Activated naive CD4-positive, alpha-beta T cell treated with anti-CD3 and anti-CD28 coated beads for 36 hours (primary cell): ENCODE measurements at regions of chr3 and their contacts with region 1.

Region 1: GRCh38 chr3:142987080-142987700 is 14.2 kb upstream of the U2SURP start:
- DNase-seq: no peak
- H3K4me3 Mint-ChIP-seq: no peak overlapping the region
- H3K27ac Mint-ChIP-seq: no peak overlapping the region
- H3K4me1 Mint-ChIP-seq: no peaks in the 10 kb centered on the region
- H3K27me3 Mint-ChIP-seq: no peaks in the 10 kb centered on the region

Region 2: GRCh38 chr3:142844339-142844977 is 142.7 kb before region 1 on chr3:
- CTCF ChIA-PET with region 1: interaction called, 3 read pairs
- intact Hi-C with region 1: loop called (anchors 1 kb)
- DNase-seq: no peak
- H3K4me3 Mint-ChIP-seq: no peak overlapping the region
- H3K27ac Mint-ChIP-seq: no peak overlapping the region
- H3K4me1 Mint-ChIP-seq: peaks cover 2% of the 10 kb centered on the region
- H3K27me3 Mint-ChIP-seq: peaks cover 7% of the 10 kb centered on the region

Region 3: GRCh38 chr3:142929109-142929508 is 58.1 kb before region 1 on chr3:
- CTCF ChIA-PET with region 1: interaction called, 4 read pairs
- intact Hi-C with region 1: loop called (anchors 1 kb)
- DNase-seq: peak; percentile 65
- H3K4me3 Mint-ChIP-seq: no peak overlapping the region
- H3K27ac Mint-ChIP-seq: no peak overlapping the region
- H3K4me1 Mint-ChIP-seq: no peaks in the 10 kb centered on the region
- H3K27me3 Mint-ChIP-seq: peaks cover 13% of the 10 kb centered on the region

Region 4: GRCh38 chr3:143010024-143010423 is 22.8 kb after region 1 on chr3:
- CTCF ChIA-PET with region 1: no interaction called
- intact Hi-C with region 1: no loop called
- DNase-seq: no peak
- H3K4me3 Mint-ChIP-seq: no peak overlapping the region
- H3K27ac Mint-ChIP-seq: no peak overlapping the region
- H3K4me1 Mint-ChIP-seq: peaks cover 76% of the 10 kb centered on the region
- H3K27me3 Mint-ChIP-seq: no peaks in the 10 kb centered on the region

Region 5: GRCh38 chr3:143035466-143036211 is 48.4 kb after region 1 on chr3:
- CTCF ChIA-PET with region 1: no interaction called
- intact Hi-C with region 1: no loop called
- DNase-seq: no peak
- H3K4me3 Mint-ChIP-seq: no peak overlapping the region
- H3K27ac Mint-ChIP-seq: no peak overlapping the region
- H3K4me1 Mint-ChIP-seq: peaks cover 2% of the 10 kb centered on the region
- H3K27me3 Mint-ChIP-seq: no peaks in the 10 kb centered on the region